ENCODE measurements at regions of chr10 and their contacts with region 1.

Region 1: DNA sequence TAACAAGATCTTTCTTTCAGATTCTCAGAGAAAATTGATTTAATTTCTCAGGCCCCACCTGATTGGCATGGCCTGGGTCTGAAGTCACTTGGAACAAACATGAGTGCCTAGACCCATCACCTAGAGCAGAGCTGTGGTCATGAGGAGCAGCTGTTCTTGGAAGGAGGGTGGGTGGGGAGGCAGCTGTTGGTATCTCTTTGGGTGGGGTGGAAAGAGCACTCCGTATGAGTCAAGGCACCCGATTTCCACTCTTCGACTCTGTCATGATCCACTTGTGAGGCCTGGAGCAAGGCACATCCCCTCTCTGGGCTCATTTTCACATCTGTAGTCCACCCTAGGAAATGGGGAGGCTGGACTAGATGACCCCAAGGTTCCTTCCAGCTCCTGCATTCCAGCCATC is 156.7 kb downstream of the C10orf105 start:
- DNase-seq: no peak
- H3K4me3 ChIP-seq: no peak overlapping the region
- H3K27ac ChIP-seq: no peak overlapping the region
- H3K4me1 ChIP-seq: no peaks in the 10 kb centered on the region
- H3K27me3 ChIP-seq: no peaks in the 10 kb centered on the region
- CTCF ChIP-seq: no peak

Region 2: GRCh38 chr10:71522442-71523144 is 40.3 kb before region 1 on chr10:
- CTCF ChIA-PET with region 1: no interaction called
- dilution Hi-C with region 1: no loop called
- in situ Hi-C with region 1: no loop called
- intact Hi-C with region 1: loop called (anchors 2 kb)
- DNase-seq: no peak
- H3K4me3 ChIP-seq: no peak overlapping the region
- H3K27ac ChIP-seq: no peak overlapping the region
- H3K4me1 ChIP-seq: peaks cover 17% of the 10 kb centered on the region
- H3K27me3 ChIP-seq: no peaks in the 10 kb centered on the region
- CTCF ChIP-seq: peak in 1 of 2 donors; percentile 23